Gastrocnemius medialis (tissue), 4 donors: ENCODE measurements at regions of chr15 and their contacts with region 1.

Region 1: DNA sequence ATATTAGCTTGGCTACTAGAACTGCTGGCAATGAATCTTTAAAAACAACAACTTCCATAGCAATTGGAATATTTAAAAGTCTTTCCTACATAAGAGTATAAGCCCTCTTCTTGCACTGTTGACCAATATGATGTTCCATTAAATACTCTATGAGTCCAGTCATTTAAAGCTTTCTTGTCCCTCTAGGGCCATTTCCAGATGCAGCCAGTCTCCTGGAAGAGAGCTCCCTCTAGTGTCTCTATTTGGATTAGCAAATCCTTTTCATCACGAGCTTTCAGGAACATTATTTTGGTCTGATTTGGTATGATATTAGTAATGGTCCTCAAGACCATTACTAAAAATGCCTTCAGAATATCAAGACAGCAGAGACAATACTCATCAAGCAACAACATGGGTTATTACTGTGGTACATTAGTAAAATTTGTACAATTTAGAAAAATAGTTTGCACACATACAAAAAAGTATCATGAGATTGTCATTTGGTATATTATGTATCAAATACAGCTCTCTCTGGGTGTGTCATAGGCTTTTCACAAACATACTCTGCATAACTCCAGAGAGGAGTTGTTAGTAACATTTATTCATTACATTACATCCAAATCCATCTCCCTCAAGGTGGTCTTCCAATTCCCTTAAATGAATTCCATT is 101.3 kb downstream of the DPH6 start:
- DNase-seq: no peak
- ATAC-seq: no peak
- H3K4me3 ChIP-seq: no peak overlapping the region
- H3K27ac ChIP-seq: no peak overlapping the region
- H3K4me1 ChIP-seq: no peaks in the 10 kb centered on the region
- H3K27me3 ChIP-seq: no peaks in the 10 kb centered on the region
- CTCF ChIP-seq: peak; percentile 25 to 76 (median 47)
- POLR2A ChIP-seq: no peak

Region 2: GRCh38 chr15:35078221-35078915 is 366.3 kb before region 1 on chr15:
- in situ Hi-C with region 1: loop called in 1 of 4 experiments (anchors 25 kb)
- intact Hi-C with region 1: no loop called
- DNase-seq: no peak
- ATAC-seq: no peak
- H3K4me3 ChIP-seq: no peak overlapping the region
- H3K27ac ChIP-seq: no peak overlapping the region
- H3K4me1 ChIP-seq: no peaks in the 10 kb centered on the region
- H3K27me3 ChIP-seq: no peaks in the 10 kb centered on the region
- CTCF ChIP-seq: peak; percentile 24 to 59 (median 45)
- POLR2A ChIP-seq: no peak

Region 3: DNA sequence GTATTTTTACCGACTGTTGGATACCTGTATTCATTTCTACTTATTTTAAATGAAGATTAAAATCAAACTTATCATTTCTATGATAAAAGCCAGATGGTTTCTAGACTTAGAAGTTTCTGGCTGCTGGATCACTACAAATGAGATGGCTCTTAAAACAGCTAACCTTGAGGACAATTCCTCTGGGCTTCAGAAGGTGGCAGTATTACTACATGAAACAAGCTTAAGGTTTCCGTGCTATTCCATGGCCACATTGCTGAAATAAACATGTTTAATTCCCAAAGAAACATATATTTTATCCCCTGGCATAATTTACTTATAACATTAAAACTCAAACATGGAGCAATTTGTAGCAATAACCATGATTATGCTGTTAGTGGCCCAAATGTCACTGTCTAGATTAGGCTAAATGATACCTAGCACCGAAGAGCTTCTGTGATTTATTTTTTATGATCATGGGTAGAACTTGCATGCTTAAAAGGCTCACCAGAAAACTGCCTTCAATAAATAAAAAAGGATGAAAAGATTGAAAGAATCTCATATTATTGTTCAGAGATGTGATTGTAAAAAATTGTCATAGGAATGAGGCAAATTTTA is 155.6 kb before region 1 on chr15:
- in situ Hi-C with region 1: loop called in 2 of 4 experiments (anchors 10 kb)
- intact Hi-C with region 1: loop called (anchors 1 kb)
- DNase-seq: no peak
- ATAC-seq: peak; percentile 64 to 75
- H3K4me3 ChIP-seq: no peak overlapping the region
- H3K27ac ChIP-seq: no peak overlapping the region
- H3K4me1 ChIP-seq: peaks cover 0 to 8% of the 10 kb centered on the region in 2 donors
- H3K27me3 ChIP-seq: no peaks in the 10 kb centered on the region
- CTCF ChIP-seq: peak in 4 of 5 experiments; percentile 43 to 65 (median 57)
- POLR2A ChIP-seq: no peak

Region 4: GRCh38 chr15:35427091-35427490 is 17.6 kb before region 1 on chr15:
- in situ Hi-C with region 1: no loop called
- intact Hi-C with region 1: no loop called
- DNase-seq: no peak
- ATAC-seq: no peak
- H3K4me3 ChIP-seq: no peak overlapping the region
- H3K27ac ChIP-seq: no peak overlapping the region
- H3K4me1 ChIP-seq: no peaks in the 10 kb centered on the region
- H3K27me3 ChIP-seq: no peaks in the 10 kb centered on the region
- CTCF ChIP-seq: no peak
- POLR2A ChIP-seq: no peak